Ascending aorta (tissue), 2 donors: ENCODE measurements at regions of chrX and their contacts with region 1.

Region 1: GRCh38 chrX:103629318-103630170 is 769 bp downstream of the TCEAL1 start:
- DNase-seq: peak in 1 of 2 donors; percentile 80
- H3K4me3 ChIP-seq: peak overlapping the region; percentile 47 to 68
- H3K27ac ChIP-seq: peak overlapping the region; percentile 82 to 90
- H3K4me1 ChIP-seq: no peaks in the 10 kb centered on the region
- H3K27me3 ChIP-seq: no peaks in the 10 kb centered on the region
- CTCF ChIP-seq: peak in 1 of 3 experiments; percentile 40

Region 2: DNA sequence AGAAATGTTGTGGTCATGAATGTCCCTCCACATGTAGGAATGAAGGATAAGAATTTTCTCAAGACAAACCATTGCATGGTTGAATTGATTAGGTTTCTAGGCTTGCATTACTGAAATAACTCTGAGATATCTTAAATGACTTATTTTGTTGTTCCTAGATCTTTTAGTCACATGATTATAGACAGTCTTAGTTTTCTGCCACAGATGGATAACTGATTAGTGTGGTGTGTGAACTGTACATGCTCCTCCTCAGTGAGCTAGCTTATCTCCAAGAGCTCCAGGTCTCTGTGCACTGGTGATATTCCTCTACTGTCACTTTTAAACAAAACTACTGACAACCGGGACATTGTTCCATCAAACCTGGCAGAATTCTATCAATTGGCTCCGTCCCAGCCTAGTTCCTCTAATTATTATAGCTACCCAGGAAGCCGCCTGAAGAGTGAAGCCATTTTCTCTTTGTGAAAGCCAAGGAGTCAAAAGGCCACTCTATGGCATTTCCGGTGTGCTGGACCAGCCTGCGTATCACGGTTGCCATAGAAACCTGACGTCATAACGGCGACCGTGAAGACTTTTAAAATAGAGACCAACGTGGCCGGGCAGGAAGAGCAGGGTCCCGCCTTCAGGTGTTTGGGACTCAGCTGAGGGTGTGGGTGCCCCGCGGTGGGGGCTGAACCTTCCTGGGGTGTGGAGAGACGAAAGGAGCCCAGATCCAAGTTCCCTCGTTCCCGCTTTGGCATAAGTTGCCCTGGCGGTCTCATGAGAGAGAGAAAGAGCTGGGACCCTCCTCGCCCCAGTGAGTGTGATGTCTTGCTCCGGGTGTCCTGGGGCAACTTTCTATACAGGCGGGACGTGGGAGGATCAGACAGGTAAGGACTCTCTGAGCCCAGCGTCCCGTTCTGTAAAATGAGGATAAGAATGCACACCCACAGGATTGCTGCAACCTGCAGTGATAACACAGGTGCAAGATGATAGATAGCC is 225.0 kb before region 1 on chrX:
- intact Hi-C with region 1: no loop called
- DNase-seq: peak; percentile 24 to 87
- H3K4me3 ChIP-seq: peak overlapping the region; percentile 51 to 63
- H3K27ac ChIP-seq: peak overlapping the region; percentile 37 to 58
- H3K4me1 ChIP-seq: no peaks in the 10 kb centered on the region
- H3K27me3 ChIP-seq: no peaks in the 10 kb centered on the region
- CTCF ChIP-seq: no peak

Region 3: GRCh38 chrX:103533511-103534216 is 95.9 kb before region 1 on chrX:
- intact Hi-C with region 1: loop called (anchors 2 kb)
- DNase-seq: peak; percentile 16 to 90
- H3K4me3 ChIP-seq: peak overlapping the region; percentile 45 to 56
- H3K27ac ChIP-seq: peak overlapping the region; percentile 52 to 63
- H3K4me1 ChIP-seq: peaks cover 0 to 10% of the 10 kb centered on the region in 2 donors
- H3K27me3 ChIP-seq: no peaks in the 10 kb centered on the region
- CTCF ChIP-seq: peak; percentile 60 to 88 (median 81)

Region 4: DNA sequence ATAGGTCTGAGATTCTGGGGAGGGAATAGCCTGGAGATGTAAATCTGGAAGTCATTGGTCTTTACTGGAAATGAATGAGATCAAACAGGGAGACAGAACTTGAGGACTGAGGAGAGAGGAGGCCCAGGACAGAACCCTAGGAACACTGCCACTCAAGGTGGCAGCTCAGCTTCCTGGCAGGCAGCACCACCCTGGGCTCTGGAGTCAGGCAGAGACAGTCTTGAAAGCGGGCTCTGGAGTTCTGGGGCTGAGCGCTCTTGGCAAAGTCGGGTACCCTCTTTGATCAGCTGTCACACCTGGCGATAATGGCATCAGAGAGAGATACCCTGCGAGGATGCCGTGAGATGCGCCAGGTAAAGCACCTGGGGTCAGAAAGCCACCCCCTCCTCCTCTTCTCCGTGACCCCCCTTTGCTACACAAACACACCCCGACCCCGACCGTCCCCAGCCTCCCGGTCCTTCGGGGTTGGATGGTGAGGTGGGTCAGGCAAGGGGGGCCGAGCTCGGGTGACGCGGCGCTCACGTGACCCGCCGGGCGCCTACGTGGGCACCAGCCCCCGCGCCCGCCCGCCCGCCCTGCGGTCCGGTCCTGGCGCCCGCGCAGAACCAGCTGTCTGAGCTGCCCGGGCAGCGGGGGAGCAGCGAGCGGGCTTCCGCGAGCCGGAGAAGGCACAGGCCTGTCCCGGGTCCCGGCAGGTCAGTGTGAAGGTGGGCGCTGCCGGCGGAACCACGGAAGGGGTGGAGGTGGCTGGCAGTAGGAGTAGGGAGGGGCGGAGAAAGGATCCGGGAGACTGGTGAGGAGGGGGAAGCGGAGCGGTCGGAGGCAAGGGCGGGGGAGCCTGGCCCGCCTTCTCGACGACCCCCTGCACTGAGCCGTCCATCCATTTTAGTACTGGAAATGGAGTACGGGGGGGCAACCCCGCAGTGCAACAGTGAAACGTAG is 21.9 kb before region 1 on chrX and contains the start of gene TCEAL3:
- intact Hi-C with region 1: loop called (anchors 2 kb)
- DNase-seq: peak in 1 of 2 donors; percentile 79
- H3K4me3 ChIP-seq: peak within 1 kb of the TSS; percentile 75 to 85
- H3K27ac ChIP-seq: peak within 1 kb of the TSS; percentile 93 to 94
- H3K4me1 ChIP-seq: no peaks in the 10 kb centered on the region
- H3K27me3 ChIP-seq: no peaks in the 10 kb centered on the region
- CTCF ChIP-seq: no peak
- total RNA-seq, gene TCEAL3: 11.3 TPM

Region 5: GRCh38 chrX:103831803-103832544 is 202.4 kb after region 1 on chrX and contains the start of gene RAB9B:
- intact Hi-C with region 1: no loop called
- DNase-seq: peak in 1 of 2 donors; percentile 81
- H3K4me3 ChIP-seq: peak within 1 kb of the TSS; percentile 59 to 80
- H3K27ac ChIP-seq: peak within 1 kb of the TSS; percentile 69 to 87
- H3K4me1 ChIP-seq: no peaks in the 10 kb centered on the region
- H3K27me3 ChIP-seq: peaks cover 8% of the 10 kb centered on the region
- CTCF ChIP-seq: no peak
- total RNA-seq, gene RAB9B: 0.43 TPM